Activated naive CD4-positive, alpha-beta T cell treated with anti-CD3 and anti-CD28 coated beads, Interleukin-2, amount 10 ng/mL, durations not matched to agents 7 days and 5 days (primary cell): ENCODE measurements at regions of chr18 and their contacts with region 1.

Region 1: GRCh38 chr18:13813271-13813849 is 10.6 kb upstream of the MC5R start:
- DNase-seq: peak; percentile 73
- H3K4me3 Mint-ChIP-seq: no peak overlapping the region
- H3K27ac Mint-ChIP-seq: no peak overlapping the region
- H3K4me1 Mint-ChIP-seq: no peaks in the 10 kb centered on the region
- H3K27me3 Mint-ChIP-seq: peaks cover 21% of the 10 kb centered on the region

Region 2: GRCh38 chr18:13558124-13558523 is 255.2 kb before region 1 on chr18:
- CTCF ChIA-PET with region 1: interaction called, 12 read pairs
- DNase-seq: peak; percentile 44
- H3K4me3 Mint-ChIP-seq: no peak overlapping the region
- H3K27ac Mint-ChIP-seq: no peak overlapping the region
- H3K4me1 Mint-ChIP-seq: peaks cover 27% of the 10 kb centered on the region
- H3K27me3 Mint-ChIP-seq: no peaks in the 10 kb centered on the region

Region 3: GRCh38 chr18:13680612-13681011 is 132.7 kb before region 1 on chr18:
- CTCF ChIA-PET with region 1: no interaction called
- DNase-seq: peak; percentile 22
- H3K4me3 Mint-ChIP-seq: no peak overlapping the region
- H3K27ac Mint-ChIP-seq: no peak overlapping the region
- H3K4me1 Mint-ChIP-seq: no peaks in the 10 kb centered on the region
- H3K27me3 Mint-ChIP-seq: no peaks in the 10 kb centered on the region

Region 4: DNA sequence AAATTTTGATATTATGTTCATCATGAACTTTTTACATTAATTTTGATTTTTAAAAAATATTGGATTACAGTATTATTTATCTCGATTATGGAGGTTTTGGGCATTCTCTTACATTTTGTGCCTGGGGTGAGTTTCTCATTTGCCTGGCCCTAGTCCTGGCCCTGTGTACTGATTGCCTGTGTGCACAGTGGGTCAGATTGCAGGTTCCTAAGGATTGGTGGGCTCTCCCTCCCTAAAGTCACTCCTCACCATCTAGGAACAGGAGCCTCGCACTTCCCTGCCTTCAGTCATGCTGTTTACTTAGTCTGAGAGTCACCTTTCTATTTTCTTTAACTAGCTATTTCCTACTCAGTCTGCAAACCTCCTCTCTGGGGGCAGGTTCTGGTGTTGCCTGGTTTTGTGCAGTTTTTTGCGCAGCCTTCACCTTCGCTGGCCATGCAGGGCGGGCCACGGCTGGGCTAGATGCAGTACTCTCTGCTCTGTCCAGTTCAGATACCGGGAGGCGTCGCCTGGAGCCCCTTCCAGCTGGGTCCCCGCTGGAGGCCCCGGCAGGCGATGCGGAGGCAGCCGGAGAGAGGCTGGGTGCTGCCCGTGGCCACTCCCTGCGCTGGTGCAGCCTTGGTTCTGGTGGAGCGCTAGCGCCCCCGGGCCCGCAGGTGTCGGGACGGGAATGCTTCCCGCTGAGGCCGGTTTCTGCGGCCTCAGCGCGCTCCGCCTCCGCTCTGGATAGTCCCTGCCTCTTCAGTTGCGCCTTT is 12.7 kb before region 1 on chr18:
- CTCF ChIA-PET with region 1: interaction called, 35 read pairs
- DNase-seq: peak; percentile 61
- H3K4me3 Mint-ChIP-seq: peak overlapping the region; percentile 2
- H3K27ac Mint-ChIP-seq: no peak overlapping the region
- H3K4me1 Mint-ChIP-seq: peaks cover 4% of the 10 kb centered on the region
- H3K27me3 Mint-ChIP-seq: peaks cover 72% of the 10 kb centered on the region

Region 5: DNA sequence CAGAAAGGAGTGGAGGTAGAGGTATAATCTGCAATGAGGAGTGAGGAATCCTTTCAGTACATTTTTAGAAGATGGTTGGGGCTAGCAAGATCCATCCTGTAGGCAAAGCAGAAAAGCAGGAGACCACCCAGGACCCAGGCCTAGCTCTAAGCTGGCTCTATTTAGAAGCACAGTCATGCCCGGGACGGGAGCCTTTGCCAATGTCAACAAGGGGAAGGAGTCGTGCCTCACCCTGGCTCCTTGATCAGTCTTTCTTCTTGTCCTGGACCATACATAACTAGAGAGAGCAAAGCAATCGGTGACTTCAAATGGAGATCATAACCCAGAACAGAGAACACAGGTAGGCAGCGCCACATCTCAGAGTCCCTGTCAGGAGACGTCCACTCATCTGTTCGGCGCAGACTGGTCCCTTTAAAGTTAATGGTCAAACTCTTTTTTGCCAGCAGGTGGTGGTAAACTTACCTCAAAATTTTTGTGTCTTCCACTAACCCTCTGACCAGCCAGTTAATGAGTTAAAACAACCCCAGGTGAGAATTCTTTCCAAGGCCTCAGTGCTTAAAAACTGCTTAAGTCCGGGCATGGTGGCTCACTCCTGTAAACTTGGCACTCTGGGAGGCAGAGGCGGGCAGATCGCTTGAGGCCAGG is 18.6 kb after region 1 on chr18:
- CTCF ChIA-PET with region 1: no interaction called
- DNase-seq: no peak
- H3K4me3 Mint-ChIP-seq: no peak overlapping the region
- H3K27ac Mint-ChIP-seq: no peak overlapping the region
- H3K4me1 Mint-ChIP-seq: no peaks in the 10 kb centered on the region
- H3K27me3 Mint-ChIP-seq: peaks cover 38% of the 10 kb centered on the region

Region 6: GRCh38 chr18:14086458-14087231 is 273.3 kb after region 1 on chr18:
- CTCF ChIA-PET with region 1: interaction called, 24 read pairs
- DNase-seq: no peak
- H3K4me3 Mint-ChIP-seq: no peak overlapping the region
- H3K27ac Mint-ChIP-seq: no peak overlapping the region
- H3K4me1 Mint-ChIP-seq: no peaks in the 10 kb centered on the region
- H3K27me3 Mint-ChIP-seq: no peaks in the 10 kb centered on the region